ENCODE measurements at regions of chr18 and their contacts with region 1.

Region 1: GRCh38 chr18:64949885-64950284 is 800.9 kb upstream of the CDH7 start:
- DNase-seq: no peak
- H3K4me3 ChIP-seq: no peak overlapping the region
- H3K4me3 Mint-ChIP-seq: no peak overlapping the region
- H3K27ac ChIP-seq: no peak overlapping the region
- H3K27ac Mint-ChIP-seq: no peak overlapping the region
- H3K4me1 ChIP-seq: no peaks in the 10 kb centered on the region
- H3K4me1 Mint-ChIP-seq: no peaks in the 10 kb centered on the region
- H3K27me3 ChIP-seq: no peaks in the 10 kb centered on the region
- H3K27me3 Mint-ChIP-seq: peaks cover 0 to 1% (median 0%) of the 10 kb centered on the region in 3 donors
- CTCF ChIP-seq: no peak

Region 2: DNA sequence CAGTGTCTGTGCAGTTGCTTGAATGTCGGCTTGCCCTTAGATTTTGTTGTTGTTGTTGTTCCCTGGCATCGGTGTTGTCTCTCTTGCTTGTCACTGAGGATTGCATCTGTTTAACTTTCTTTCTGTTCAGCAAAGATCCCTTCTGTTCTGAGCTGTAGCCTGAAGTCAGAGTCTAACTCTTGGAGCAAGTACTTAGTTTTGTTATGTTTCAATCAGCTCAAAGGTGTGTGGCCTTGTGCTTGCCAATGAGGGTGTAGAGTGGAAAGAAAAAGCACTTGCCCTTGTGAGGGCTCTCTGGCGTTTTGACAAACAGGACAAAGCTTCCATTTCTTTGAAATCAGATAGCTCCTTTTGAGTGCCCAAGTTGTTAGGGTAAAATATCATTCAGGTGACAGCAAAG is 43.8 kb after region 1 on chr18:
- intact Hi-C with region 1: loop called in 1 of 2 experiments (anchors 10 kb)
- DNase-seq: no peak
- H3K4me3 ChIP-seq: no peak overlapping the region
- H3K4me3 Mint-ChIP-seq: no peak overlapping the region
- H3K27ac ChIP-seq: no peak overlapping the region
- H3K27ac Mint-ChIP-seq: no peak overlapping the region
- H3K4me1 ChIP-seq: no peaks in the 10 kb centered on the region
- H3K4me1 Mint-ChIP-seq: no peaks in the 10 kb centered on the region
- H3K27me3 ChIP-seq: no peaks in the 10 kb centered on the region
- H3K27me3 Mint-ChIP-seq: no peaks in the 10 kb centered on the region
- CTCF ChIP-seq: no peak

Measured in CD14-positive monocyte (primary cell).